Naive thymus-derived CD4-positive, alpha-beta T cell (primary cell): ENCODE measurements at regions of chr6 and their contacts with region 1.

Region 1: GRCh38 chr6:5471044-5471443 is 209.7 kb downstream of the FARS2 start:
- DNase-seq: peak; percentile 33 to 74 (median 56)
- ATAC-seq: peak; percentile 81
- H3K4me3 ChIP-seq: no peak overlapping the region
- H3K4me3 Mint-ChIP-seq: no peak overlapping the region
- H3K27ac ChIP-seq: no peak overlapping the region
- H3K27ac Mint-ChIP-seq: no peak overlapping the region
- H3K4me1 ChIP-seq: no peaks in the 10 kb centered on the region
- H3K4me1 Mint-ChIP-seq: peaks cover 0 to 14% (median 10%) of the 10 kb centered on the region in 7 donors
- H3K27me3 ChIP-seq: no peaks in the 10 kb centered on the region
- H3K27me3 Mint-ChIP-seq: no peaks in the 10 kb centered on the region

Region 2: GRCh38 chr6:5446362-5447075 is 24.5 kb before region 1 on chr6:
- CTCF ChIA-PET with region 1: no interaction called
- POLR2A ChIA-PET with region 1: no interaction called
- intact Hi-C with region 1: no loop called
- DNase-seq: no peak
- ATAC-seq: no peak
- H3K4me3 ChIP-seq: no peak overlapping the region
- H3K4me3 Mint-ChIP-seq: no peak overlapping the region
- H3K27ac ChIP-seq: no peak overlapping the region
- H3K27ac Mint-ChIP-seq: peak overlapping the region in 1 of 9 donors; percentile 22
- H3K4me1 ChIP-seq: no peaks in the 10 kb centered on the region
- H3K4me1 Mint-ChIP-seq: peaks cover 0 to 14% (median 0%) of the 10 kb centered on the region in 7 donors
- H3K27me3 ChIP-seq: no peaks in the 10 kb centered on the region
- H3K27me3 Mint-ChIP-seq: no peaks in the 10 kb centered on the region

Region 3: GRCh38 chr6:5486214-5486613 is 15.2 kb after region 1 on chr6:
- CTCF ChIA-PET with region 1: interaction called, 10 read pairs
- POLR2A ChIA-PET with region 1: interaction called, 4 read pairs
- intact Hi-C with region 1: no loop called
- DNase-seq: no peak
- ATAC-seq: no peak
- H3K4me3 ChIP-seq: no peak overlapping the region
- H3K4me3 Mint-ChIP-seq: no peak overlapping the region
- H3K27ac ChIP-seq: no peak overlapping the region
- H3K27ac Mint-ChIP-seq: peak overlapping the region in 2 of 9 donors; percentile 20 to 45
- H3K4me1 ChIP-seq: no peaks in the 10 kb centered on the region
- H3K4me1 Mint-ChIP-seq: peaks cover 0 to 13% (median 5%) of the 10 kb centered on the region in 7 donors
- H3K27me3 ChIP-seq: no peaks in the 10 kb centered on the region
- H3K27me3 Mint-ChIP-seq: no peaks in the 10 kb centered on the region

Region 4: DNA sequence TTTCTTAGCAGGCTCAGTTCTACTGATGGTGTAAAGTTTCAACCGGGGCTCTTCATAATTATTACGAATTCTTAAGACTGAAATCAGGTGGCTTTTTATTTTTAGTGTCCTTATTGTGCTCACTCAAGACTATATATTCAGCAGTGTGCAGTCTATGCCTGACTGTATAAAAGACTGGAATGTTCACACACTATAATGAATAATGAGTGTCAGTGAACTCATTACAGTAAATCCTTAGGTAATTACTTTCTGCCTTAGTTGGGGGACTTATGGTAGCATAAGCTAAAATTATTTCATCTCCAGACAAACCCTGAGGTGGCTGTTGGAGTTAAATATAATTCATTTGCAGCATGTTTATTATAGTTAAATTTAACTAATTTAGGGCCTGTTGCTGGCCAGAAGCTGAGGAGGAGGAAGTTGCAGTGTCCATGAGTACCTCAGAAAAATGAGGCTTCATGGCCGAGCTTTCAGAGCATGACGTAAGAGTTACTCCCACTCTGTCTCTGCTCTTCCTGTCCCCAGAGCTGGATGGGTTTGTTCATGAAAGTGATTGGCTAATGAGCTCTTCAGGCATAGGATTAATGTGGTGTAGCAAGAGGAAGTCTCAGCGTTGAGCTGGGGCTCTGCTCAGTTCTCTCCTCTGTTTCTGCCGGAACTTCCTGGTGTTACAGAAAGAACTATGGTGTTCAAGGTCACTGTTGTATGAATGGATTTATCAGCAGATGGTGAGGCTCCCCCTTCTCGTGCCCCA is 199.9 kb after region 1 on chr6:
- CTCF ChIA-PET with region 1: interaction called, 11 read pairs
- POLR2A ChIA-PET with region 1: no interaction called
- intact Hi-C with region 1: loop called in 1 of 2 experiments (anchors 1 kb)
- DNase-seq: peak in 5 of 9 donors; percentile 32 to 49 (median 43)
- ATAC-seq: peak; percentile 88
- H3K4me3 ChIP-seq: no peak overlapping the region
- H3K4me3 Mint-ChIP-seq: peak overlapping the region; percentile 23 to 82 (median 64)
- H3K27ac ChIP-seq: no peak overlapping the region
- H3K27ac Mint-ChIP-seq: peak overlapping the region; percentile 43 to 90 (median 72)
- H3K4me1 ChIP-seq: peaks cover 0 to 47% of the 10 kb centered on the region in 2 donors
- H3K4me1 Mint-ChIP-seq: peaks cover 28 to 84% (median 75%) of the 10 kb centered on the region in 7 donors
- H3K27me3 ChIP-seq: no peaks in the 10 kb centered on the region
- H3K27me3 Mint-ChIP-seq: no peaks in the 10 kb centered on the region

Region 5: DNA sequence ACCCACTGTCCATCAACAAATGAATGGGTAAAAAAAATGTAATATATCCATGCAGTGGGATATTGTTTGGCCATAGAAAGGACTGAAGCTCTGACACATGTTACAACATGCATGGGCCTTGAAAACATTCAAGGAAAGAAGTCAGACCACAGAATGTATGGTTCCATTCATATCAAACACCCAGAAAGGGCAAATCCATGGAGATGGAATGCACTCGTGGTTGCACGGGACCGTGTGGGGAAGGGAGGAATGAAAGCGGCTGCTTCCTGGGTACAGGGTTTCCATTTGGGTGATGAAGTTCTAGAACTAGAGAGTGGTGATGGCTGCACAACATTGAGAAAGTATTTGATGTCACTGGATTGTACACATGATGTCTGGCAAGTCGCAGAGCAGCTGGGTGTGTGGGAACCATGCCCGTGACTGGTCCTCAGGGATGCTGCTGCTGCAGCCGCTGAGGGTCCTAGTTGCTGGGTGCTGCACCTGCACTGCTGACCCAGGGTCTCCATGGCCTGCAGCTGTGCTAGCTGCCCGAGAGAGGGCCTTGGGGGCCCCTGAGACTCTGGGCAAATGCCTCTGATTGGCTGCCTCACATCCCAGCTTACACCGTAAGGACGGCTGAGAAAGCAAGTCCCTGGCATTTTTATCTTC is 315.4 kb after region 1 on chr6:
- CTCF ChIA-PET with region 1: no interaction called
- POLR2A ChIA-PET with region 1: no interaction called
- intact Hi-C with region 1: loop called in 1 of 2 experiments (anchors 2 kb)
- DNase-seq: no peak
- ATAC-seq: peak; percentile 20
- H3K4me3 ChIP-seq: no peak overlapping the region
- H3K4me3 Mint-ChIP-seq: peak overlapping the region in 5 of 10 donors; percentile 8 to 56 (median 46)
- H3K27ac ChIP-seq: no peak overlapping the region
- H3K27ac Mint-ChIP-seq: peak overlapping the region in 3 of 9 donors; percentile 25 to 78 (median 53)
- H3K4me1 ChIP-seq: peaks cover 0 to 11% of the 10 kb centered on the region in 2 donors
- H3K4me1 Mint-ChIP-seq: peaks cover 0 to 27% (median 23%) of the 10 kb centered on the region in 7 donors
- H3K27me3 ChIP-seq: no peaks in the 10 kb centered on the region
- H3K27me3 Mint-ChIP-seq: peaks cover 0 to 4% (median 0%) of the 10 kb centered on the region in 5 donors

Region 6: DNA sequence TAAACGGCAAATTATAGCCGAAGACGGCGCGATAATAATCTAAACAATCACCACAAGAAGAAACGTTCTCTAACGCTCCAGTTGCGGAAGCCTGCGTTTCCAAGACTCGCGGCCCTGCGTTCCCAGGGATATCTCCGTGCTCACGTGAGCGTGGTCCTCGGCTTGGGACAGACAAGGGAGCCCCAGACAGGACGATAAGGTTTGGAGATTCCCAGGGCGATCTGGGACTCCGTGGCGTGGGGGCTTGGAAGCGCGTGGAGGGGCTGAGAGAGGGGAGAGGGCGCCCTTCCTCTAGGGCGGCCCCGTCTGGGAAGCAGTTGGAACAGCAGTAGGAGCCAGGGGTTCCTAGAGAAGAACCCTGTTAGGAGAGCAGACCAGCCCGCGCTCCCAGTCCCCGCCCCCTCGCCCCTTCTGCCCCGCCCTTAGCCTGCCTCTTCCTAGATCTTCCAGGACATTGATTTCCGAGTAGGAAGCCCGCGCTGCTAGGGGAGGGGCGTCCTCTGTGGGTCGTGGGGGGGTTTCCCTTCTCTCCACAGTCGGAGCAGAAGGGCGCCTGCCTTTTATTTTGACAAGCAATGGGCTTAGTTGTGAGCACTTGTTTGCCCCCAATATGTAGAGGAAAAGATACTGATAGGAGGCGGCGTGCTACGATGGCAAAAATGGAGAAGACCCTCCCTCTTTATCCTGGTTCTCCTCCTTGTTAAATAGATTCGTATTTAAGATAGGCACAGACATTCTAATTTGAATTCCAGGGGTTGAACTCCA is 525.1 kb after region 1 on chr6:
- CTCF ChIA-PET with region 1: interaction called, 3 read pairs
- POLR2A ChIA-PET with region 1: no interaction called
- intact Hi-C with region 1: loop called in 1 of 2 experiments (anchors 2 kb)
- DNase-seq: peak in 1 of 9 donors; percentile 29
- ATAC-seq: no peak
- H3K4me3 ChIP-seq: peak overlapping the region; percentile 84
- H3K4me3 Mint-ChIP-seq: peak overlapping the region; percentile 87 to 93 (median 90)
- H3K27ac ChIP-seq: no peak overlapping the region
- H3K27ac Mint-ChIP-seq: peak overlapping the region in 8 of 9 donors; percentile 15 to 86 (median 64)
- H3K4me1 ChIP-seq: peaks cover 27 to 53% of the 10 kb centered on the region in 2 donors
- H3K4me1 Mint-ChIP-seq: peaks cover 48 to 69% (median 58%) of the 10 kb centered on the region in 7 donors
- H3K27me3 ChIP-seq: peaks cover 44 to 80% of the 10 kb centered on the region in 2 donors
- H3K27me3 Mint-ChIP-seq: peaks cover 86 to 95% (median 93%) of the 10 kb centered on the region in 5 donors

Region 7: DNA sequence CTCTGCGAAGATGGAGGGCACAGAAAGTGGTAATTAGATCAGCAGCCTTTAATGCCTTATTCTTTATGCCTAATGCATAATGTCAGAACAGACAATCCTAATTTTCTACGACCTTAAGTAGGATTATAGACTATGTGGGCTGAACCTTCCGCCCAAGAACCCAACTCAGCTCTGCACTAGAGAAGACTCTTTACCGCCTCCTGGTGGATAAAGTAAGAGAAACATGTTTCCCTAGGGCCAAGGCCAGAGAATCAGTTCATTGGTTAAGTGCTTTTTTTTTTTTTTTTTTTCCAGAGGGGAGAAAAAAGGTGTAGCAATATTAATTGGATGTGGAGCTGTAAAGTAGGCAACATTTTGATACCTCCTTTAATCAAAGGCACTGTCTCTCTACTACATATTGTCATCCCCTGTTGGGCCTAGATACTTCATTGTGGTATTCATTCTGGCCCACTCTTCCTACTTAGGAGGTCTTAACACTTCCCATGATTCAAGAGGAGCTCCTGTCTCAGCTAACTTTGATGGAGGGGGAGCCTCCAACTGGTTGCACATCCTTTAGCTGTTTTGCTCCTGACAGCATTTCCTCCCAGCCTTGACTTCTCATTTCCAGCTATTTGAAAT is 660.6 kb after region 1 on chr6:
- CTCF ChIA-PET with region 1: interaction called, 5 read pairs
- POLR2A ChIA-PET with region 1: no interaction called
- intact Hi-C with region 1: loop called in 1 of 2 experiments (anchors 1 kb)
- DNase-seq: peak in 5 of 9 donors; percentile 3 to 31 (median 21)
- ATAC-seq: peak; percentile 52
- H3K4me3 ChIP-seq: no peak overlapping the region
- H3K4me3 Mint-ChIP-seq: no peak overlapping the region
- H3K27ac ChIP-seq: no peak overlapping the region
- H3K27ac Mint-ChIP-seq: no peak overlapping the region
- H3K4me1 ChIP-seq: no peaks in the 10 kb centered on the region
- H3K4me1 Mint-ChIP-seq: no peaks in the 10 kb centered on the region
- H3K27me3 ChIP-seq: no peaks in the 10 kb centered on the region
- H3K27me3 Mint-ChIP-seq: peaks cover 0 to 13% (median 8%) of the 10 kb centered on the region in 5 donors